B cell (primary cell): ENCODE measurements at regions of chr17 and their contacts with region 1.

Region 1: DNA sequence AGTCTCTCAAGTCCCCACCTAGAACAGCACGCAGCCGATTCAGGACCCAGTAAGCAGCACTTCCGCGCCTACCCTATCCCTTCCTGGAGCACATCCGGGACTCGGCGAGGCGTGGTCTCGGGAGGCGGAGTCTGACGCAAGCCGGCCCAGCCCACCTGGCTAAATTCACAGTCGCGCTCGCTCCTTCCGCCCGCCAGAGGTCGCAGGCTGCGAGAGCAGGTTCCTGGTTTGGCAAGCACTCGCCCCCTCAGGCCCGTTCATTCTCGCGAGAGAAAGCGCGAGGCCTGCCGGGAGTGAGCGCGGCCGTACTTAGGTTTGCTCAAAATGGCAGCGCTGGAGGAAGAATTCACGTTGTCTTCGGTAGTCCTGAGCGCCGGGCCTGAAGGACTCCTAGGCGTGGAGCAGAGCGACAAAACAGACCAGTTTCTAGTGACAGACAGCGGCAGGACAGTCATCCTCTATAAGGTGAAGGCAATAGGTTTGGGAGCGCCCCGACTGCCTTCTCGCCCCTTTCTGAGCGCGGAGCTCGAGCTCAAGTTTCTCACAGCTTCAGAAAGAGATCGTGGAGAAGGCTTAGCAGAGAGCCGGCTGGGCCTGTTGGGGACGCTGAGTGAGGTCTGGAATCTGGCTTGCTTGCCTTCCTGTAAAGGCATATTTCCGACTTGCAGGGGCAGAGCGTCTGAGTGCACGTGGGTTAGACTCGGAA is at the start of gene NOL11:
- DNase-seq: peak; percentile 100
- ATAC-seq: peak; percentile 95
- H3K4me3 ChIP-seq: peak within 1 kb of the TSS; percentile 70 to 97 (median 91)
- H3K4me3 Mint-ChIP-seq: peak within 1 kb of the TSS; percentile 98
- H3K27ac ChIP-seq: peak within 1 kb of the TSS; percentile 88 to 97
- H3K27ac Mint-ChIP-seq: peak within 1 kb of the TSS; percentile 97
- H3K4me1 ChIP-seq: peaks cover 18 to 21% of the 10 kb centered on the region in 2 donors
- H3K4me1 Mint-ChIP-seq: peaks cover 20% of the 10 kb centered on the region
- H3K27me3 ChIP-seq: no peaks in the 10 kb centered on the region
- H3K27me3 Mint-ChIP-seq: no peaks in the 10 kb centered on the region
- CTCF ChIP-seq: peak; percentile 86
- total RNA-seq, gene NOL11: 59.1 and 59.9 TPM in 2 replicates

Region 2: DNA sequence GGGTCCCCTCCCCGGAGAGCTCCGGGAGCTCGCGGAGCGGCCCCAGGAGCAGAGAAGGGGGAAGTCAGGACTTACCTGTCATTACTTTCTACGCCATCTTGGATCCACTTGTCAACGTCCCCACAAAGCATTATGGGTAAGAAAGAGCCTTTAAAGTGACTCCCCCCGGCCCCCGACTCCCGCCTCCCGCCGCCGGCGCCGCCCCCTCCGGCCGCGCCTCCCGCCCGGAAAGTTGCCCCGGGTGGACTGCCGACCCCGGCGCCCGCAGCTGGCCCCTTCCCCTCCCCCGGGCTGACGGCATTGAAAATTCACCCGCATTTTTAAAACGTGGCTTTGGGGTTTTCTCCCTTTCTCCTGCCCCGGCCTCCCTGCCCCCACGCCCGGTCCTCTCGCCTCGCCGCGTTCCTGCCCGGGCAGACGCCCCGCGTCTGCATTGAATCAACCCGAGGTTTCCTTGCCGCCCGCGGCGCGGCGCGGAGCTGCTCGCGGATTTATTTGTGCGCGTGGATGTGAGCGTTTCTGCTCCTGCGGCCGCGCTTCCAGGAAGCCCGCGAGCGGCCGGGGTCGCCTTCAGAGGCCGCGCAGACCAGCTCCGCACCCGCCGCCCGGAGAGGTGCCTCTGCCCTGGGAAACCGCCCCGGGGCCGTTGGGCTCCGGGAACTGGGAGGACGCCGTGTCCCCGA is 472.6 kb before region 1 on chr17 and contains the start of gene HELZ:
- CTCF ChIA-PET with region 1: no interaction called
- POLR2A ChIA-PET with region 1: no interaction called
- intact Hi-C with region 1: loop called (anchors 2 kb)
- DNase-seq: peak; percentile 87
- ATAC-seq: peak; percentile 85
- H3K4me3 ChIP-seq: peak within 1 kb of the TSS; percentile 71 to 94 (median 90)
- H3K4me3 Mint-ChIP-seq: peak within 1 kb of the TSS; percentile 87
- H3K27ac ChIP-seq: peak within 1 kb of the TSS; percentile 52 to 89
- H3K27ac Mint-ChIP-seq: peak within 1 kb of the TSS; percentile 88
- H3K4me1 ChIP-seq: peaks cover 21 to 23% of the 10 kb centered on the region in 2 donors
- H3K4me1 Mint-ChIP-seq: peaks cover 44% of the 10 kb centered on the region
- H3K27me3 ChIP-seq: peaks cover 0 to 9% (median 0%) of the 10 kb centered on the region in 4 experiments
- H3K27me3 Mint-ChIP-seq: peaks cover 4% of the 10 kb centered on the region
- CTCF ChIP-seq: no peak
- total RNA-seq, gene HELZ: 89.9 and 97.8 TPM in 2 replicates

Region 3: GRCh38 chr17:67779098-67779672 is 61.4 kb after region 1 on chr17:
- CTCF ChIA-PET with region 1: no interaction called
- POLR2A ChIA-PET with region 1: no interaction called
- intact Hi-C with region 1: no loop called
- DNase-seq: peak; percentile 32
- ATAC-seq: no peak
- H3K4me3 ChIP-seq: no peak overlapping the region
- H3K4me3 Mint-ChIP-seq: no peak overlapping the region
- H3K27ac ChIP-seq: no peak overlapping the region
- H3K27ac Mint-ChIP-seq: no peak overlapping the region
- H3K4me1 ChIP-seq: peaks cover 0 to under 1% of the 10 kb centered on the region in 2 donors
- H3K4me1 Mint-ChIP-seq: no peaks in the 10 kb centered on the region
- H3K27me3 ChIP-seq: no peaks in the 10 kb centered on the region
- H3K27me3 Mint-ChIP-seq: no peaks in the 10 kb centered on the region
- CTCF ChIP-seq: peak; percentile 67

Region 4: GRCh38 chr17:67818110-67819002 is 100.6 kb after region 1 on chr17:
- CTCF ChIA-PET with region 1: no interaction called
- POLR2A ChIA-PET with region 1: no interaction called
- intact Hi-C with region 1: loop called (anchors 1 kb)
- DNase-seq: peak; percentile 93
- ATAC-seq: peak; percentile 60
- H3K4me3 ChIP-seq: peak overlapping the region in 2 of 5 experiments; percentile 10 to 29
- H3K4me3 Mint-ChIP-seq: peak overlapping the region; percentile 73
- H3K27ac ChIP-seq: peak overlapping the region; percentile 71 to 78
- H3K27ac Mint-ChIP-seq: peak overlapping the region; percentile 92
- H3K4me1 ChIP-seq: peaks cover 56 to 73% of the 10 kb centered on the region in 2 donors
- H3K4me1 Mint-ChIP-seq: peaks cover 65% of the 10 kb centered on the region
- H3K27me3 ChIP-seq: no peaks in the 10 kb centered on the region
- H3K27me3 Mint-ChIP-seq: no peaks in the 10 kb centered on the region
- CTCF ChIP-seq: no peak

Region 5: GRCh38 chr17:68238164-68238872 is 520.5 kb after region 1 on chr17:
- CTCF ChIA-PET with region 1: no interaction called
- POLR2A ChIA-PET with region 1: no interaction called
- intact Hi-C with region 1: loop called (anchors 5 kb)
- DNase-seq: no peak
- ATAC-seq: no peak
- H3K4me3 ChIP-seq: peak overlapping the region; percentile 11 to 61 (median 49)
- H3K4me3 Mint-ChIP-seq: peak overlapping the region; percentile 85
- H3K27ac ChIP-seq: peak overlapping the region; percentile 99 to 100
- H3K27ac Mint-ChIP-seq: peak overlapping the region; percentile 99
- H3K4me1 ChIP-seq: peaks cover 42 to 60% of the 10 kb centered on the region in 2 donors
- H3K4me1 Mint-ChIP-seq: peaks cover 65% of the 10 kb centered on the region
- H3K27me3 ChIP-seq: no peaks in the 10 kb centered on the region
- H3K27me3 Mint-ChIP-seq: no peaks in the 10 kb centered on the region
- CTCF ChIP-seq: no peak